K562 (cell line): ENCODE measurements at regions of chr6 and their contacts with region 1.

Region 1: GRCh38 chr6:34757687-34758274 is 476 bp downstream of the SNRPC start:
- DNase-seq: no peak
- ATAC-seq: no peak; the same call in 2 of the 3 replicates
- H3K4me3 ChIP-seq: peak overlapping the region; percentile 58
- H3K27ac ChIP-seq: peak overlapping the region; percentile 96
- H3K4me1 ChIP-seq: peaks cover 3 to 22% of the 10 kb centered on the region in 2 experiments; a peak in 4 of 5 replicates
- H3K27me3 ChIP-seq: no peaks in the 10 kb centered on the region
- CTCF ChIP-seq: no peak
- EP300 ChIP-seq: no peak
- POLR2A ChIP-seq: no peak
- RAD21 ChIP-seq: no peak

Region 2: GRCh38 chr6:34656378-34657036 is 101.3 kb before region 1 on chr6:
- CTCF ChIA-PET with region 1: no interaction called
- POLR2A ChIA-PET with region 1: interaction called, 12 read pairs
- in situ Hi-C with region 1: no loop called
- intact Hi-C with region 1: loop called (anchors 10 kb)
- DNase-seq: peak in 2 of 4 experiments; percentile 53 to 73
- ATAC-seq: peak; percentile 63
- H3K4me3 ChIP-seq: no peak overlapping the region
- H3K27ac ChIP-seq: peak overlapping the region; percentile 88
- H3K4me1 ChIP-seq: peaks cover 32 to 51% of the 10 kb centered on the region in 2 experiments
- H3K27me3 ChIP-seq: no peaks in the 10 kb centered on the region
- CTCF ChIP-seq: no peak
- EP300 ChIP-seq: 0 out of 2 replicates have a peak, but pooled peaks have one; percentile 12
- POLR2A ChIP-seq: no peak
- RAD21 ChIP-seq: 0 out of 4 replicates have a peak, but pooled peaks of 1 of the 2 experiments have one; percentile 17

Region 3: GRCh38 chr6:34696739-34697543 is 60.8 kb before region 1 on chr6 and contains the start of gene ILRUN:
- CTCF ChIA-PET with region 1: interaction called, 3 read pairs
- POLR2A ChIA-PET with region 1: interaction called, 3 read pairs
- in situ Hi-C with region 1: no loop called
- intact Hi-C with region 1: loop called (anchors 2 kb)
- DNase-seq: peak; percentile 96 to 100 (median 98)
- ATAC-seq: peak; percentile 89
- H3K4me3 ChIP-seq: peak within 1 kb of the TSS; percentile 98
- H3K27ac ChIP-seq: peak within 1 kb of the TSS; percentile 89
- H3K4me1 ChIP-seq: peaks cover 17 to 22% of the 10 kb centered on the region in 2 experiments; a peak in 4 of 5 replicates
- H3K27me3 ChIP-seq: no peaks in the 10 kb centered on the region
- CTCF ChIP-seq: no peak
- EP300 ChIP-seq: no peak
- POLR2A ChIP-seq: peak; percentile 84
- RAD21 ChIP-seq: peak; percentile 7 to 14; a peak in 2 of 4 replicates
- polyA plus RNA-seq, gene ILRUN: 24.9 to 30.7 TPM

Region 4: GRCh38 chr6:34771727-34772126 is 13.9 kb after region 1 on chr6:
- CTCF ChIA-PET with region 1: no interaction called
- POLR2A ChIA-PET with region 1: interaction called, 14 read pairs
- in situ Hi-C with region 1: no loop called
- intact Hi-C with region 1: no loop called
- DNase-seq: no peak
- ATAC-seq: no peak
- H3K4me3 ChIP-seq: no peak overlapping the region
- H3K27ac ChIP-seq: no peak overlapping the region
- H3K4me1 ChIP-seq: no peaks in the 10 kb centered on the region; a peak in 1 of 5 replicates
- H3K27me3 ChIP-seq: no peaks in the 10 kb centered on the region
- CTCF ChIP-seq: no peak
- EP300 ChIP-seq: no peak
- POLR2A ChIP-seq: no peak
- RAD21 ChIP-seq: no peak